Mammary epithelial cell (primary cell): ENCODE measurements at regions of chr3 and their contacts with region 1.

Region 1: GRCh38 chr3:69324362-69325025 is 61.4 kb downstream of the FRMD4B start:
- DNase-seq: no peak
- H3K4me3 ChIP-seq: no peak overlapping the region
- H3K27ac ChIP-seq: no peak overlapping the region
- H3K4me1 ChIP-seq: no peaks in the 10 kb centered on the region
- H3K27me3 ChIP-seq: no peaks in the 10 kb centered on the region
- CTCF ChIP-seq: peak; percentile 17 to 51

Region 2: GRCh38 chr3:68408626-68409025 is 915.9 kb before region 1 on chr3:
- CTCF ChIA-PET with region 1: no interaction called
- dilution Hi-C with region 1: no loop called
- in situ Hi-C with region 1: no loop called
- intact Hi-C with region 1: no loop called
- DNase-seq: no peak
- H3K4me3 ChIP-seq: no peak overlapping the region
- H3K27ac ChIP-seq: no peak overlapping the region
- H3K4me1 ChIP-seq: no peaks in the 10 kb centered on the region
- H3K27me3 ChIP-seq: no peaks in the 10 kb centered on the region
- CTCF ChIP-seq: no peak

Region 3: DNA sequence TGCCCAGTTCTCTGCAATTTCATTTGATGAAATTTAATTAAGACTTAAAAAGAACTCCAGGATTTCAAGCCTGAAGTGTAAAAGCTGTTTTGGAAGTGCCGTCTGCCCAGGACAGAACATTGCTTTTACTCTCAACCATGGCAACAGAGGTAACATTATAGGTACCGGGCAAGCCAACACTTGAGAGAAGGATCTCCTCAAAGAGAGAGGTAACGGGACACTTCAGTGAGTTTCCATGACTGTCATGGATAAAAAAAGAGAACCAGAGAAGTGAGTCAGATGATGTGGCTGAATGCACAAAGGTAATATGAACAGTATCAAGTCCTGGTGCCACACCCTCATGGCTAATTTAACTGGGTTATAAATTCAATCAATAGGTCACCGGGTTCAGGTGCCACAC is 71.9 kb before region 1 on chr3:
- CTCF ChIA-PET with region 1: no interaction called
- dilution Hi-C with region 1: loop called (anchors 5 kb)
- in situ Hi-C with region 1: no loop called
- intact Hi-C with region 1: no loop called
- DNase-seq: peak; percentile 85
- H3K4me3 ChIP-seq: no peak overlapping the region
- H3K27ac ChIP-seq: no peak overlapping the region
- H3K4me1 ChIP-seq: peaks cover 11% of the 10 kb centered on the region
- H3K27me3 ChIP-seq: no peaks in the 10 kb centered on the region
- CTCF ChIP-seq: no peak

Region 4: GRCh38 chr3:69354948-69355347 is 30.5 kb after region 1 on chr3:
- CTCF ChIA-PET with region 1: no interaction called
- dilution Hi-C with region 1: loop called (anchors 5 kb)
- in situ Hi-C with region 1: no loop called
- intact Hi-C with region 1: no loop called
- DNase-seq: peak; percentile 52
- H3K4me3 ChIP-seq: no peak overlapping the region
- H3K27ac ChIP-seq: no peak overlapping the region
- H3K4me1 ChIP-seq: peaks cover 15% of the 10 kb centered on the region
- H3K27me3 ChIP-seq: no peaks in the 10 kb centered on the region
- CTCF ChIP-seq: no peak

Region 5: GRCh38 chr3:69385723-69386555 is 61.4 kb after region 1 on chr3 and contains the start of gene FRMD4B:
- CTCF ChIA-PET with region 1: no interaction called
- dilution Hi-C with region 1: no loop called
- in situ Hi-C with region 1: no loop called
- intact Hi-C with region 1: loop called (anchors 2 kb)
- DNase-seq: peak; percentile 65
- H3K4me3 ChIP-seq: peak within 1 kb of the TSS; percentile 32 to 68 (median 59)
- H3K27ac ChIP-seq: peak within 1 kb of the TSS; percentile 76
- H3K4me1 ChIP-seq: peaks cover 41% of the 10 kb centered on the region
- H3K27me3 ChIP-seq: no peaks in the 10 kb centered on the region
- CTCF ChIP-seq: peak; percentile 16 to 43
- total RNA-seq, gene FRMD4B: 42.0 to 64.1 TPM

Region 6: GRCh38 chr3:69425261-69425660 is 100.8 kb after region 1 on chr3:
- CTCF ChIA-PET with region 1: no interaction called
- dilution Hi-C with region 1: no loop called
- in situ Hi-C with region 1: loop called in 1 of 2 experiments (anchors 25 kb)
- intact Hi-C with region 1: loop called (anchors 1 kb)
- DNase-seq: peak; percentile 37
- H3K4me3 ChIP-seq: no peak overlapping the region
- H3K27ac ChIP-seq: no peak overlapping the region
- H3K4me1 ChIP-seq: peaks cover 36% of the 10 kb centered on the region
- H3K27me3 ChIP-seq: no peaks in the 10 kb centered on the region
- CTCF ChIP-seq: peak; percentile 67 to 73